Tibial artery (tissue), 4 donors: ENCODE measurements at regions of chr5 and their contacts with region 1.

Region 1: GRCh38 chr5:141908796-141909195 is 14.9 kb upstream of the DELE1 start:
- DNase-seq: no peak
- H3K4me3 ChIP-seq: no peak overlapping the region
- H3K27ac ChIP-seq: no peak overlapping the region
- H3K4me1 ChIP-seq: peaks cover 0 to 5% (median 2%) of the 10 kb centered on the region in 4 donors
- H3K27me3 ChIP-seq: peaks cover 0 to 9% of the 10 kb centered on the region in 2 donors
- CTCF ChIP-seq: no peak

Region 2: DNA sequence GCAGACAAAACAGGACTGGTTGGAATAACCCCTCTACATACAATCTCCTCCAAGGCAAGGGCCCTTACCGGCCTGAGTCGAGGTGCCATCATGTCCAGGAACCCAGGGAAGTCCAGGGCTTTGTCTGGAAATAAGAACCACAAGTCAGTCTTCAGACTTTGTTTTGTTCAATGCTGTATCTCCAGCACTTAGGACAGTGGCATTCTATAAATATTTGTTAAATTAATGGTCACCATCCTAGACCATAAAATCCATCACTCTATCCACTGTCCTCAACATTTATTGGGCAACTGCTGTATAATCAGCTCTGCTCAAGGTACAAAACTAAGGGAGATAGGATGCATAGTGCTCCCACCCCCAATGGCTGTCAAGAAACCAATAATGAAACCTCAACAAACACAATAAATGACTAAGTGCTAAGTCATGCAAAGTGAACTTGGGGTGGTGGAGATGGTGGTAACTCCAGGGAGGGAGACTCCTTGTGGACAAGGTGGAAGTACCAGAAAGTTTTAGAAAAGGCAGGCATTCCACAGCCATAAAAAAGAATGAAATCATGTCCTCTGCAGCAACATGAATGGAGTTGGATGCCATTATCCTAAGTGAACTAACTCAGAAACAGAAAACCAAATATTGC is 267.0 kb before region 1 on chr5:
- intact Hi-C with region 1: no loop called
- DNase-seq: no peak
- H3K4me3 ChIP-seq: no peak overlapping the region
- H3K27ac ChIP-seq: no peak overlapping the region
- H3K4me1 ChIP-seq: peaks cover 0 to 13% (median 10%) of the 10 kb centered on the region in 4 donors
- H3K27me3 ChIP-seq: peaks cover 0 to 5% of the 10 kb centered on the region in 2 donors
- CTCF ChIP-seq: no peak

Region 3: DNA sequence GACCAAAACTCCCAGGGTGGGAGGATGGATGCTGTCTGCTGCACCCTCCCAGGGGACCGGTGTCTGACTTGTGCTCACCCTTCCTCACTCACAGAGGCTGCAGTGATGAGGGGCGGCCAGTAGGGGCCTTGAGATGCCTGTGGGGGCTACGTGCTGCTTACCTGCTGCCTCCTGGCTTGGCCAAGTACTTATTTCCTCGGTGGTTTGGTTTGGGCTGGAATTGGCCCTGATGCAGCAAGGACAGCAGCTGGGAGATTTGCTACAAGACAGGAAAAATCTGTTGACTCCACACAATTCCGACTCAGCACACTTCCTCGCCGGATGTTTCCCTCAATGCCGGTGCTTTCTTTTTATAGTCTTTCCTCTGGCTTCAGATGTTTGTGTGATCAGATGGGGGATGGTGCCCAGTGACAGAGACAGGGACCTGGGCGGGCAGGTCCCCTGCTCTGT is 42.6 kb after region 1 on chr5:
- intact Hi-C with region 1: loop called (anchors 10 kb)
- DNase-seq: peak in 1 of 2 donors; percentile 53
- H3K4me3 ChIP-seq: no peak overlapping the region
- H3K27ac ChIP-seq: no peak overlapping the region
- H3K4me1 ChIP-seq: no peaks in the 10 kb centered on the region
- H3K27me3 ChIP-seq: no peaks in the 10 kb centered on the region
- CTCF ChIP-seq: no peak

Region 4: GRCh38 chr5:142053426-142054151 is 144.8 kb after region 1 on chr5:
- intact Hi-C with region 1: no loop called
- DNase-seq: peak in 1 of 2 donors; percentile 51
- H3K4me3 ChIP-seq: no peak overlapping the region
- H3K27ac ChIP-seq: no peak overlapping the region
- H3K4me1 ChIP-seq: peaks cover 0 to 21% (median 0%) of the 10 kb centered on the region in 4 donors
- H3K27me3 ChIP-seq: no peaks in the 10 kb centered on the region
- CTCF ChIP-seq: no peak